Mammary epithelial cell (primary cell): ENCODE measurements at regions of chr9 and their contacts with region 1.

Region 1: GRCh38 chr9:70581214-70581954 is 166.9 kb upstream of the KLF9 start:
- DNase-seq: no peak
- H3K4me3 ChIP-seq: no peak overlapping the region
- H3K27ac ChIP-seq: no peak overlapping the region
- H3K4me1 ChIP-seq: peaks cover 22% of the 10 kb centered on the region
- H3K27me3 ChIP-seq: no peaks in the 10 kb centered on the region
- CTCF ChIP-seq: no peak

Region 2: DNA sequence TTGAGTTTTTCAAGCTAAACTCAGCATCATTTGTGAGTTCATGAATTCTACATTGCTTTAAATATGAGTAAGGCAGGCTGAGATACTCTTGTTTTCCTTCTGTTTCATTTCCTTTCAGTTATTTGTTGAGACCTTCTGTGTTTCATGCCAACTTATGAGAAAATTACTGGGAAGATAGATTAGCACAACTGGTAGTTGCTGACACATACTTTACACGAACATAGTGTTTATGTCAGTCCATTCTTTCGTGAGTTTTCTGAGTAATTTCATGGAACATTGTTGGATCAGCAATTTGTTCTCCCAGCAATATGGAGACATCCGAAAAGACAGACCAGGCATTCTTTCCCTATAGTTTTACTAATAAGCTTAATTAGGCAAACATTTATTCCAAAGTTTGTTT is 424.7 kb before region 1 on chr9:
- CTCF ChIA-PET with region 1: no interaction called
- dilution Hi-C with region 1: no loop called
- in situ Hi-C with region 1: no loop called
- intact Hi-C with region 1: no loop called
- DNase-seq: no peak
- H3K4me3 ChIP-seq: no peak overlapping the region
- H3K27ac ChIP-seq: no peak overlapping the region
- H3K4me1 ChIP-seq: no peaks in the 10 kb centered on the region
- H3K27me3 ChIP-seq: no peaks in the 10 kb centered on the region
- CTCF ChIP-seq: no peak

Region 3: DNA sequence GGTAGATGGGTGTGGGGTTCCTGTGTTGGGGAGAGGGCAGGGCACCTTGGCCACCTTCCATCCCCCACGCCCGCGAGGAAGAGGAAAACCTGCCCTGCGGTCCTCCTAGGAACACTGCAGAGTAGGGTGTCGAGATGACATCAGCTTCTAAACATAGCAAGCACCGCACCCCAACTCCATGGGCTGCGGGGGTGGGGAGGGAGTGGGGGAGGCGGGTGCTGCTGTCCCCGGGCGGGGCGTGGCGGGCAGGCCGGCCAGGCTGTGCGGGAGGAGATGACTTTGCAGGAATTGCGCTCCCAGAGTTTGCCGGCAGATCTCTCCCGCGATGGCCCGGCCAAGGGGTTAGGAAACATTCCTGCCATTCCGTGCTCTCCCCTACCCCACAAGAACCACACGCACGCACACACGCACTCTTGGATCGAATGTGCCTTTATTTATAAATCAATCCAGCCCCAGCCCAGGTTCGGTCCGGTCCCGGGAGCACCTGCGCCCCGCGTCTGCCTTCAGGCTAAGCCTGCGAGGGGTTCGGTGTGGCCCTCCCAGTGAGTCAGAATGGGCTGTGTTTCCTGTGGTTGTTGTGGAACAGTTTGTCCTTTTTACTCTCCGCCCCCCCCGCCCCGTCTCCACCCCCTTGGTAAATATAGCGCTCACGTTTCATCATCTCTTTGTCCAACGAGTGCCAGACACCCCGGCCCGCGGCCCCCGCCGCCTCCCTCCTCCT is 161.7 kb before region 1 on chr9:
- CTCF ChIA-PET with region 1: no interaction called
- dilution Hi-C with region 1: no loop called
- in situ Hi-C with region 1: loop called in 1 of 2 experiments (anchors 10 kb)
- intact Hi-C with region 1: loop called (anchors 5 kb)
- DNase-seq: peak; percentile 93
- H3K4me3 ChIP-seq: peak overlapping the region; percentile 26 to 54 (median 44)
- H3K27ac ChIP-seq: peak overlapping the region; percentile 87
- H3K4me1 ChIP-seq: peaks cover 25% of the 10 kb centered on the region
- H3K27me3 ChIP-seq: no peaks in the 10 kb centered on the region
- CTCF ChIP-seq: peak in 1 of 2 donors; percentile 21

Region 4: DNA sequence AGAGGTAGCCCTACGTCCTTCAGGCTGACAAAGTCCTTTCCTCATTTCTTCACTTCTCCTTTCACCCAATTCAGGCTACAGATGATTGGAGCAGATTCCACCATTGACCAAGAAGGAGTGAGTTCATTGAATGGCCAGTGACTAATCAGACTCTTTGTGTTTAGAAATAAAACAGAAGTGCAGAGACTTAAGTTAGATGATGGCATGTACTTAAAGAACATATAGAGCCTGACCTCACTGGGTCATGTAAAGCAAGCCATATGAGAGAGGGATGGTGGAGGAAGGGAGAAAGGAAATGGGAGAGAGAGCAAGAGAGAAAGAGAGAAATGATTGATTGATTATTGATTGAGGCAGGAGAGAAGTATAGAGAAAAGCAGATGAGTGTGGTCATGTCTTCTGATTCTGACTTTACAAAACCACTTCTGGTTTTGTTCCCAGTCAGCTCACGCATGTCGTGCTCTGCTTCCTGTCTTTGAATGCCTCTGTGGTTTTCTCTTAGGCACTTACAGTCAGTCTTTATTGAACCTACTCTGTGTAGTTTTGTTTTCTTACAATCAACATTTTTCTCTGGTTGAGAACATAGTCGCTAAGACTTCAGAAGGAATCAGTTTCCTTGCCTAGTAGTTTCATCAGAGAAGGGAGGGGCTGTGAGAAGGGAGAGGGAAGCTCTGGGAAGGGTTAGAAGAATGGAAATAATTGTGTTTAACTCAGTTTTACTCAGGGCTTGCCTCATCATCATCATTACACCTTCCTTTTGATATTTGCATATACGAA is 17.8 kb before region 1 on chr9:
- CTCF ChIA-PET with region 1: no interaction called
- dilution Hi-C with region 1: no loop called
- in situ Hi-C with region 1: no loop called
- intact Hi-C with region 1: no loop called
- DNase-seq: peak; percentile 56
- H3K4me3 ChIP-seq: no peak overlapping the region
- H3K27ac ChIP-seq: no peak overlapping the region
- H3K4me1 ChIP-seq: peaks cover 10% of the 10 kb centered on the region
- H3K27me3 ChIP-seq: no peaks in the 10 kb centered on the region
- CTCF ChIP-seq: no peak